ENCODE measurements at regions of chr13 and their contacts with region 1.

Region 1: DNA sequence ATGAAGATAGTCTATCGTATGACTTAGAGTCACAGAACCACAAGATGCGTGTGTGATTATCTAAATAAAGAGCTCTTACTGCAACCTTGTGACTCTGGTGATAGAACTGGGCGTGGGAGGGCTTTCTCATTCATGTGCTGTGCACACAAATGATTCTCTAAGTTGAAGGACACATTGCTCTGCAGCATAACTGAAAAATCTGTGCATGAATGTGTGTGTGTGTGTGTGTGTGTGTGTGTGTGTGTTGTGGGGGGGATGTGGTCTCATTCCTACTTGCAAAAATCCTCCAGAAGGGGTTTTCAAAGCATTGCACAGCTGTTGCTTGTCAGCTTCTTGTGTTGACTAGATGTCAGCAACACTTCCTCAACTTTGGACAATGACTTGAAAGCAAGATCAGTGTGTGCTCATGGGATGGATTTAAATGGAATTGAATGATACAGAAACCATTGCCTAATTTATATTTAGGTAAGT is 22.4 kb downstream of the LRCH1 start:
- DNase-seq: peak; percentile 89
- ATAC-seq: peak; percentile 28
- H3K4me3 ChIP-seq: no peak overlapping the region
- H3K27ac ChIP-seq: no peak overlapping the region; the same call in 1 of the 2 replicates
- H3K4me1 ChIP-seq: peaks cover 28% of the 10 kb centered on the region
- H3K27me3 ChIP-seq: no peaks in the 10 kb centered on the region
- CTCF ChIP-seq: no peak
- POLR2A ChIP-seq: no peak
- RAD21 ChIP-seq: no peak

Region 2: GRCh38 chr13:46561691-46562090 is 13.6 kb before region 1 on chr13:
- CTCF ChIA-PET with region 1: no interaction called
- POLR2A ChIA-PET with region 1: no interaction called
- dilution Hi-C with region 1: no loop called
- in situ Hi-C with region 1: no loop called
- intact Hi-C with region 1: loop called (anchors 2 kb)
- DNase-seq: peak; percentile 70
- ATAC-seq: peak; percentile 65
- H3K4me3 ChIP-seq: no peak overlapping the region
- H3K27ac ChIP-seq: no peak overlapping the region
- H3K4me1 ChIP-seq: peaks cover 8% of the 10 kb centered on the region
- H3K27me3 ChIP-seq: no peaks in the 10 kb centered on the region
- CTCF ChIP-seq: no peak
- POLR2A ChIP-seq: no peak
- RAD21 ChIP-seq: no peak